Activated CD4-positive, alpha-beta T cell treated with anti-CD3 and anti-CD28 coated beads, Interleukin-2, amount 10 ng/mL, durations not matched to agents 24 days and 14 days (primary cell): ENCODE measurements at regions of chr4 and their contacts with region 1.

Region 1: DNA sequence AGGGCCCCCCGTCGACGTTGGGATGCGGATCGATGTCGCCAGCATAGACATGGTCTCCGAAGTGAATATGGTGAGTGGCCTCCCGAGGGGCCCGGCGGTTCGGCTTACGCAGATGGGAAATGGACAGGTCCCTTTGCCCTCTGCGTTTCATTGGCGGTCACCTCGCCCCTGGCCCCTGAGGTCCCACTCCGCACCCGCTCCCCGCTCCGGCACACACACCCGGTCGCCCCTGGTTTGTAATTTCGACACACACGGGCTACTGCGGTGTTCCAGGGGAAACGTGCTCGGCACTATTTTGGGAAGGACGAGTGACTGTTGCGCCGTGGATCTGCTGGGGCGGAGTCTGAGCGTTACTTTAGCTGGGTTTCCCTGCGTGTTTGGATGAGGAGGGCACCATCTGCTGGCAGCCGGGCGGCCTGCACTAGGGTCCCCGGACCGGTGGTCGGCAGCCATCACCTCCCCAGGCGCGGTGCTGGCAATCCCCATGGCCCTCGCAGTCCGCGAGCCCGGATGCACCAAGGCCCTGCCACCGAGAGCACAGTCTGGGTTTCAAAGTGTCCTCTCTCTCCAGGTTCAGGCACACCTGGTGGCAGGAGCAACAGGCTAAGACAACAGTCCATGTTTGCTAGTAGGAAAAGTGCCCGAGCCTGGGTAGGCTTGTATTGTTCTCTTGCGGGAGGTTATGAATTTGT is 1.2 kb downstream of the GABRB1 start:
- DNase-seq: peak; percentile 82
- H3K4me3 Mint-ChIP-seq: peak overlapping the region; percentile 74
- H3K27ac Mint-ChIP-seq: no peak overlapping the region
- H3K4me1 Mint-ChIP-seq: peaks cover 17% of the 10 kb centered on the region
- H3K27me3 Mint-ChIP-seq: peaks cover 45% of the 10 kb centered on the region

Region 2: DNA sequence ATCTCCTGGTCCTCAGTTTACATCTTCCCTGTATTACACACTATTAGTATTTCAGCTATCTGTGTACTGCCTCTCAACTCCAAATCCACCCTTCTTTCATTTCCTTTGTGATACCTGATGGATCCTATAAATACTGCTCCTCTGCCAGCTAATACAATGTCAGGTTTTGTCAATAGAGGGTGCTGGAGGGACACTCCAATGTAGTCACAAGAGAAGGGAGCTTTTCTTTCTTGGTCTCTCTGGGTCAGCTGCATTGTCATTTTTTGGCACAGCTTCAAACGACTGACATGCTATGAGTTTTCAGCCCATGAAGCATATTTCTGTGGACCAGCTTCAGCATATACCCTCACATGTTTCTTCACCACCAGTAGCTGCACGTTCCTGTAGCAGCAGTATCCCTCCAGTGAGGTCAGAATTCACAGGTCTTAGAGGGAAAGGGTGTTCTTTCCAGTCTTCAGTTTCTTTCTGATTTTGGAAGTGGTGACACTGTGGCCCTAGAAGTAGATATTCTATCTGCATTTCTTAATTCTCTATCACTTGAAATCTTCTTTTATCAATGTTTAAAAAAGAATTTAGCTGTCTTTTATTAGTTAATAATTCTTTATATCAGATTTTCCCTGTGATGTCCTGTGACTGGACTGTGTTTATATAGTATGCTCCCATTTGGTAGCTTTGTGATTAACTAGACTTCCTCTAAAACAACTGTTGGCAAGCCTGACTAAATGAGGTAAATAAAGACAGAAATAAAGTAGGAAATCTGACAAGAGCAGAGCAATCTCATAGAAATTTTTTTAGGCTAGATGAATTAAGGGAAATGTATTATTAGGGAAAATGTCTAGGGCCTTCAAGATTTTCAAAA is 703.2 kb before region 1 on chr4:
- intact Hi-C with region 1: no loop called
- DNase-seq: no peak
- H3K4me3 Mint-ChIP-seq: no peak overlapping the region
- H3K27ac Mint-ChIP-seq: no peak overlapping the region
- H3K4me1 Mint-ChIP-seq: no peaks in the 10 kb centered on the region
- H3K27me3 Mint-ChIP-seq: no peaks in the 10 kb centered on the region

Region 3: GRCh38 chr4:46844325-46844917 is 188.1 kb before region 1 on chr4:
- intact Hi-C with region 1: loop called (anchors 2 kb)
- DNase-seq: peak; percentile 81
- H3K4me3 Mint-ChIP-seq: no peak overlapping the region
- H3K27ac Mint-ChIP-seq: no peak overlapping the region
- H3K4me1 Mint-ChIP-seq: no peaks in the 10 kb centered on the region
- H3K27me3 Mint-ChIP-seq: no peaks in the 10 kb centered on the region

Region 4: GRCh38 chr4:46900082-46900481 is 132.5 kb before region 1 on chr4:
- intact Hi-C with region 1: no loop called
- DNase-seq: no peak
- H3K4me3 Mint-ChIP-seq: no peak overlapping the region
- H3K27ac Mint-ChIP-seq: no peak overlapping the region
- H3K4me1 Mint-ChIP-seq: no peaks in the 10 kb centered on the region
- H3K27me3 Mint-ChIP-seq: no peaks in the 10 kb centered on the region

Region 5: DNA sequence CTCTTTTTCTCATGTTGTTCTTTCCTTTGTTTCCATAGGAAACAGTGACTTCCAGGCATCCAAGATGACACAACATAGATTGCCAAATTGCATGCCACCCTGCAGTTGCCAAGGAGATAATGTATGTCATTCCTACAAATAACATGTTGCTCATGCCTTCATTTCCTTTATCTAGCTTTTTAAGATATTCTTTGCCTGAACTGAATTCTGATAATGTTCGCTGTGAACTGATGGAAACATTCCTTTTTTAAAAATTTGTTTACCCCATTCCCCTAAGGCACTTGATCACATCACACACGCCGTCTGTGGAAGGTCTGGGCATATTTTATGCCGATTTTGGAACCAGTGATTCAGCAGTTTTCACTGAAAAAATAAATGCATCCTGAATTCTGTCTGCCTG is 85.6 kb before region 1 on chr4:
- intact Hi-C with region 1: no loop called
- DNase-seq: no peak
- H3K4me3 Mint-ChIP-seq: no peak overlapping the region
- H3K27ac Mint-ChIP-seq: no peak overlapping the region
- H3K4me1 Mint-ChIP-seq: no peaks in the 10 kb centered on the region
- H3K27me3 Mint-ChIP-seq: no peaks in the 10 kb centered on the region

Region 6: GRCh38 chr4:47010912-47011446 is 21.6 kb before region 1 on chr4:
- intact Hi-C with region 1: loop called (anchors 2 kb)
- DNase-seq: peak; percentile 73
- H3K4me3 Mint-ChIP-seq: peak overlapping the region; percentile 64
- H3K27ac Mint-ChIP-seq: no peak overlapping the region
- H3K4me1 Mint-ChIP-seq: peaks cover 10% of the 10 kb centered on the region
- H3K27me3 Mint-ChIP-seq: no peaks in the 10 kb centered on the region

Region 7: GRCh38 chr4:47383829-47384427 is 351.4 kb after region 1 on chr4:
- intact Hi-C with region 1: loop called (anchors 5 kb)
- DNase-seq: no peak
- H3K4me3 Mint-ChIP-seq: no peak overlapping the region
- H3K27ac Mint-ChIP-seq: no peak overlapping the region
- H3K4me1 Mint-ChIP-seq: no peaks in the 10 kb centered on the region
- H3K27me3 Mint-ChIP-seq: peaks cover 7% of the 10 kb centered on the region